Posterior vena cava (tissue), 2 donors: ENCODE measurements at regions of chr4 and their contacts with region 1.

Region 1: GRCh38 chr4:23745377-23745776 is 144.5 kb downstream of the PPARGC1A start:
- DNase-seq: no peak

Region 2: GRCh38 chr4:23706972-23707651 is 38.3 kb before region 1 on chr4:
- intact Hi-C with region 1: no loop called
- DNase-seq: no peak

Region 3: DNA sequence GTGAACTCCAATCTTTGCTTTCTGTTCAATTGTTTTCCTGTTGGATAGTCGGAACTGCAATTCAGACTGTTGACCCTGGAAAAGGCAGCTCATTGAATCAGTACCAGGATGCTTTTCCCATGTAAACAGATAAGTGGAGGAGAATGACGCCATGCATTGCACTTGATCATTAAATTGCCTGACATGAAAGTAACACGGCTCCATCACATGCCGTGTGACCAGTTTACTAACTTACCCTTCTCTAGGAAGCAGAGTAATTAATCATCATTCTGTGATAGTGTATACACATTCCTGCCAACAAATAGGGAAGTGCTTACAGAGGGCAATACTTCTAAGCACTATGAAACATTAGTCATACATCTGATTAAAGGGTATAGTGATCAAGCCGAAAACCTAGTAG is 43.1 kb after region 1 on chr4:
- intact Hi-C with region 1: no loop called
- DNase-seq: no peak

Region 4: GRCh38 chr4:23814996-23815660 is 69.8 kb after region 1 on chr4:
- intact Hi-C with region 1: loop called in 1 of 2 experiments (anchors 2 kb)
- DNase-seq: no peak

Region 5: GRCh38 chr4:24112466-24112865 is 367.1 kb after region 1 on chr4:
- intact Hi-C with region 1: no loop called
- DNase-seq: no peak